ENCODE measurements at regions of chr12 and their contacts with region 1.

Region 1: GRCh38 chr12:121793838-121794533 is 498 bp upstream of the RHOF start:
- DNase-seq: peak; percentile 80 to 88
- ATAC-seq: peak; percentile 47 to 58
- H3K4me3 ChIP-seq: peak overlapping the region; percentile 56 to 73 (median 59)
- H3K27ac ChIP-seq: peak overlapping the region; percentile 97 to 100 (median 99)
- H3K4me1 ChIP-seq: peaks cover 55 to 56% of the 10 kb centered on the region in 2 donors
- H3K27me3 ChIP-seq: no peaks in the 10 kb centered on the region
- CTCF ChIP-seq: peak; percentile 99 to 100 (median 100)
- POLR2A ChIP-seq: no peak

Region 2: GRCh38 chr12:121697098-121697698 is 96.8 kb before region 1 on chr12:
- in situ Hi-C with region 1: loop called in 2 of 4 experiments (anchors 5 to 10 kb)
- intact Hi-C with region 1: loop called (anchors 1 kb)
- DNase-seq: no peak
- ATAC-seq: peak; percentile 14 to 51
- H3K4me3 ChIP-seq: peak overlapping the region in 1 of 4 donors; percentile 4
- H3K27ac ChIP-seq: peak overlapping the region in 1 of 4 donors; percentile 1
- H3K4me1 ChIP-seq: peaks cover 8 to 14% of the 10 kb centered on the region in 2 donors
- H3K27me3 ChIP-seq: no peaks in the 10 kb centered on the region
- CTCF ChIP-seq: peak; percentile 65 to 76 (median 70)
- POLR2A ChIP-seq: no peak

Region 3: GRCh38 chr12:121773011-121773777 is 20.8 kb before region 1 on chr12:
- in situ Hi-C with region 1: no loop called
- intact Hi-C with region 1: loop called (anchors 2 kb)
- DNase-seq: peak; percentile 50 to 69
- ATAC-seq: peak; percentile 72 to 86
- H3K4me3 ChIP-seq: peak overlapping the region in 2 of 4 donors; percentile 17 to 29
- H3K27ac ChIP-seq: peak overlapping the region; percentile 43 to 75 (median 49)
- H3K4me1 ChIP-seq: peaks cover 11 to 23% of the 10 kb centered on the region in 2 donors
- H3K27me3 ChIP-seq: no peaks in the 10 kb centered on the region
- CTCF ChIP-seq: peak; percentile 89 to 97 (median 96)
- POLR2A ChIP-seq: no peak

Region 4: GRCh38 chr12:121811434-121812319 is 17.7 kb after region 1 on chr12:
- in situ Hi-C with region 1: no loop called
- intact Hi-C with region 1: loop called (anchors 1 kb)
- DNase-seq: peak in 1 of 2 donors; percentile 71
- ATAC-seq: peak; percentile 88
- H3K4me3 ChIP-seq: peak overlapping the region; percentile 56 to 71 (median 56)
- H3K27ac ChIP-seq: peak overlapping the region; percentile 69 to 89 (median 81)
- H3K4me1 ChIP-seq: peaks cover 30 to 41% of the 10 kb centered on the region in 2 donors
- H3K27me3 ChIP-seq: no peaks in the 10 kb centered on the region
- CTCF ChIP-seq: peak; percentile 87 to 100 (median 100)
- POLR2A ChIP-seq: no peak

Region 5: DNA sequence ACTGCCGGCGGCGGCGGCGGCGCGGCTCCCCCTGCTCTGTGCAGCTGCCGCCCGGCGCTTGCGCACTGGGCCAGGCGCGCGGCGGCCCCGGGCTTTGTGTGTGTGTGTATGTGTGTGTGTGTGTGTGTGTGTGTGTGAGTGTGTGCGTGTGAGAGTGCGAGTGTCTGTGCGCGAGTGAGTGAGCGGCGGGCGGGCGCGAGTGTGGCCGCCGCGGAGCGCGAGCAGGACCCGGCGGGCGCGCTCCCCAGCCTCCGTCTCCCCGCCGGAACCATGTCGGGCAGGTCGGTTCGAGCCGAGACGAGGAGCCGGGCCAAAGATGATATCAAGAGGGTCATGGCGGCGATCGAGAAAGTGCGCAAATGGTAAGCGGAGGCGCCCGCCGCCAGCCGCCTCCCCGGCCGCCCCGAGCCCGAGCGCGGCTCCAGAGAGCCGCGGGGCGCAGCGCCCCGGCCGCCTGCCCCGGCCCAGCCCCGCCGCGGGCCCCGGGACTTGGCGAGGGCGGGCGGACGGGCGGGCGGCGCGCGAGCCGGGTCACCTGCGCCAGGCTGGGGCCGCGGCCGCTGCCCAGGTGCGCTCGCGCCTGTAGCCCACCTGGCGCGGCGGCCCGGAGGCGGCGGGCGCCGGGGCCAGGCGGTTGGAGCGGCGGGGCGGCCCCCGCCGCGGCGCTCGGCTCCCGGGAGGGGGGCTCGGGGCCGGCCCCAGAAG is 228.0 kb after region 1 on chr12 and contains the start of gene BCL7A:
- in situ Hi-C with region 1: no loop called
- intact Hi-C with region 1: loop called (anchors 5 kb)
- DNase-seq: peak; percentile 40 to 79
- ATAC-seq: peak; percentile 59 to 61
- H3K4me3 ChIP-seq: peak within 1 kb of the TSS; percentile 68 to 83 (median 79)
- H3K27ac ChIP-seq: peak within 1 kb of the TSS; percentile 90 to 96 (median 92)
- H3K4me1 ChIP-seq: peaks cover 17 to 36% of the 10 kb centered on the region in 2 donors
- H3K27me3 ChIP-seq: no peaks in the 10 kb centered on the region
- CTCF ChIP-seq: peak in 1 of 5 experiments; percentile 18
- POLR2A ChIP-seq: peak; percentile 84 to 87
- total RNA-seq, gene BCL7A: 9.8 to 23.5 (median 13.7) TPM

Measured in gastrocnemius medialis (tissue), 4 donors.